ENCODE measurements at regions of chr1 and their contacts with region 1.

Region 1: GRCh38 chr1:147599362-147600118 is 58.2 kb downstream of the BCL9 start:
- DNase-seq: peak; percentile 96 to 98
- H3K4me3 ChIP-seq: peak overlapping the region; percentile 57 to 68
- H3K27ac ChIP-seq: peak overlapping the region; percentile 82 to 91
- H3K4me1 ChIP-seq: peaks cover 0 to 39% (median 12%) of the 10 kb centered on the region in 4 donors
- H3K27me3 ChIP-seq: no peaks in the 10 kb centered on the region
- CTCF ChIP-seq: peak in 1 of 2 experiments; percentile 20

Region 2: DNA sequence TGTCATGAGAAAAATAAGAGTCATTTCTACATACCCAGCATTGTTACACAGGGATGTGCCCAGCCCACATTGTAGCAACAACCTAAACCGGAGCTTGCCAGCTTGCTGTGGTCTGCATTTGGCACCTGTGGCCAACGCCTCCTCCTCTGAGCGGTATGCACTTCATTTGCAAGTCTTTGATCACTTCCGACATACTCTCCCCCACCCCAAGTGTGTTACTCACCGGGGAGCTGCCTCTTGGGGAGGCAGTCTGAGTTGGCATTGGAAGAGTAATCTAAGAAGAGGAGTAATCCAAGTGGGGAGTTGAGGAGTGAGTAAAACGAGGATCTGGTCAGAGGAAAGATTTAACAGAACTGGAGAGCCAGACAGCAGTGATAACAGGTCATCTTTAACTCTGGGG is 54.4 kb before region 1 on chr1:
- intact Hi-C with region 1: loop called (anchors 2 kb)
- DNase-seq: no peak
- H3K4me3 ChIP-seq: no peak overlapping the region
- H3K27ac ChIP-seq: no peak overlapping the region
- H3K4me1 ChIP-seq: peaks cover 0 to 25% (median 11%) of the 10 kb centered on the region in 4 donors
- H3K27me3 ChIP-seq: no peaks in the 10 kb centered on the region
- CTCF ChIP-seq: no peak

Region 3: DNA sequence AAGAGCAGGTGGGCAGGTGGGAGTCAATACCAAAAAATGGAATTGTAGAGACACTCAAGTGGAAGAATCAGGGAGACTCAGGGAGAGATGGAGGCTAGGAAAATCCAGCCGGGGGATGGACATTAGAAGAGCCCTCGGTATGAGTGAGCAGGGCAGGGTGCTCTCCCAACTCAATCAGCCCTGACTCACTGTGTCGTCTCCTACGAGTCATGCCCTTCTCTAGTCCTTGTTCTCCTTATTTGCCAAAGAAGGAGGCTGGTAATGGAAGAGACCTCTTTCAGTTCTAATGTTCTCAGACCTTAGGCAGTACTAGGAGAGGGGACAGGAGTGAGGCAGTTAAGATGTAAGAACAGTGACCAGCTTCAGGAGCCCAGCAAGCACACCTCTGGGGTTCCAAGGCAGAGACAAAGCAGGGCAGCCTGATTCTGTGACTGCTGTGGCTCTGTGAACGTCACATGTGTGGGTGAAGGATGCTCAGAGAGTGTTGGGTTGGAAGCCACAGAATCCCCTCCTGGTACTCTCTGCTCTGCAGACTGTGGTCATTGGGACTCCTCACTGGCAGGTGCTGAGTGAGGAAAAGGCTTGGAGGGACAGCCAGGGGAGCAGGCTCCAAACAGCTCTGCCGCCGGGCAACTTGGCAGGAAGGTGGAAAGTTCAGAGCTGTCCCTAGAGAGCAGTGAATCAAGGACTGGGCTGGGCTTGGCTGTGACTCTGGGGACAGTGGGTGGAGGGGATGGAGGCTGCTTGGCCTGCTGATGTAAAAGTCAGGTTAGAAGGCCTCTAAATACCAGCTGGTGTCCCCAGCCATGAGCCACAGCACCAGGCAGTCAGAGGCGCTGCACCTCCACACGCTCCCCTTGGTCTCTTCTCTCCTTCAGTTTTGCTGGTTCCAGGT is 171.9 kb after region 1 on chr1:
- intact Hi-C with region 1: loop called (anchors 10 kb)
- DNase-seq: peak; percentile 71 to 94
- H3K4me3 ChIP-seq: peak overlapping the region; percentile 52 to 57
- H3K27ac ChIP-seq: peak overlapping the region; percentile 86 to 89
- H3K4me1 ChIP-seq: peaks cover 0 to 73% (median 46%) of the 10 kb centered on the region in 4 donors
- H3K27me3 ChIP-seq: no peaks in the 10 kb centered on the region
- CTCF ChIP-seq: no peak

Region 4: GRCh38 chr1:147878022-147878421 is 278.5 kb after region 1 on chr1:
- intact Hi-C with region 1: no loop called
- DNase-seq: no peak
- H3K4me3 ChIP-seq: no peak overlapping the region
- H3K27ac ChIP-seq: no peak overlapping the region
- H3K4me1 ChIP-seq: no peaks in the 10 kb centered on the region
- H3K27me3 ChIP-seq: no peaks in the 10 kb centered on the region
- CTCF ChIP-seq: no peak

Measured in tibial artery (tissue), 4 donors.